OCI-LY7 (cell line): ENCODE measurements at regions of chr9 and their contacts with region 1.

Region 1: GRCh38 chr9:2271426-2271825 is 256.3 kb downstream of the SMARCA2 start:
- DNase-seq: peak; percentile 42
- H3K4me3 ChIP-seq: no peak overlapping the region
- H3K27ac ChIP-seq: no peak overlapping the region
- H3K4me1 ChIP-seq: peaks cover 34% of the 10 kb centered on the region
- CTCF ChIP-seq: no peak

Region 2: GRCh38 chr9:2228132-2228531 is 43.3 kb before region 1 on chr9:
- CTCF ChIA-PET with region 1: no interaction called
- POLR2A ChIA-PET with region 1: interaction called, 6 read pairs
- intact Hi-C with region 1: loop called (anchors 10 kb)
- DNase-seq: peak; percentile 73
- H3K4me3 ChIP-seq: no peak overlapping the region
- H3K27ac ChIP-seq: no peak overlapping the region
- H3K4me1 ChIP-seq: peaks cover 24% of the 10 kb centered on the region
- CTCF ChIP-seq: peak; percentile 96

Region 3: GRCh38 chr9:2255128-2255527 is 16.3 kb before region 1 on chr9:
- CTCF ChIA-PET with region 1: interaction called, 3 read pairs
- POLR2A ChIA-PET with region 1: interaction called, 12 read pairs
- intact Hi-C with region 1: no loop called
- DNase-seq: no peak
- H3K4me3 ChIP-seq: no peak overlapping the region
- H3K27ac ChIP-seq: no peak overlapping the region
- H3K4me1 ChIP-seq: peaks cover 41% of the 10 kb centered on the region
- CTCF ChIP-seq: peak; percentile 27; the same call in 1 of the 2 replicates

Region 4: GRCh38 chr9:2307480-2307879 is 36.1 kb after region 1 on chr9:
- CTCF ChIA-PET with region 1: no interaction called
- POLR2A ChIA-PET with region 1: no interaction called
- intact Hi-C with region 1: no loop called
- DNase-seq: no peak
- H3K4me3 ChIP-seq: no peak overlapping the region
- H3K27ac ChIP-seq: no peak overlapping the region
- H3K4me1 ChIP-seq: no peaks in the 10 kb centered on the region
- CTCF ChIP-seq: no peak

Region 5: DNA sequence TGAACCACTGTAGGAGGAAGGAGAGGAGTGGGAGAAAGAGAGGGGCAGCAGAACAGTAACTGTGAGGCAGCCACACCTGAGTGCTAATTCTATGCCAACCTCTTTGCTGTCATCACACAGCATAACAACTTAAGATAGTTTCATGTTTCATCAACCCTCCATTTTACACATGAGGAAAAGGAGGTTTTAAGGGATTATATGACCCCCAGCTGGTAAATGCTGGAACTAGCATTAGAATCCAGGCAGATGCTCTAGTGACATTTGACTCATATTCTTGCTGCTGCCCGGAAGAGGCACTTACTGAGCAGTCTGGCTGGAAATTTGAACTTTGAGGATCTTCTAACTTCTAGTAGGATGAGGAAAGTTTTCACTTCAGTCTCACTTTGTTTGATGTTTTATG is 326.1 kb after region 1 on chr9:
- CTCF ChIA-PET with region 1: no interaction called
- POLR2A ChIA-PET with region 1: no interaction called
- intact Hi-C with region 1: no loop called
- DNase-seq: no peak
- H3K4me3 ChIP-seq: no peak overlapping the region
- H3K27ac ChIP-seq: no peak overlapping the region
- H3K4me1 ChIP-seq: no peaks in the 10 kb centered on the region
- CTCF ChIP-seq: no peak